ENCODE measurements at regions of chr5 and their contacts with region 1.

Region 1: GRCh38 chr5:56838409-56839039 is 23.2 kb downstream of the MAP3K1 start:
- DNase-seq: no peak

Region 2: GRCh38 chr5:56270568-56271392 is 567.7 kb before region 1 on chr5:
- CTCF ChIA-PET with region 1: interaction called, 38 read pairs
- POLR2A ChIA-PET with region 1: no interaction called
- DNase-seq: peak; percentile 80

Region 3: GRCh38 chr5:56737951-56738606 is 100.4 kb before region 1 on chr5:
- CTCF ChIA-PET with region 1: no interaction called
- POLR2A ChIA-PET with region 1: no interaction called
- DNase-seq: no peak

Region 4: GRCh38 chr5:56827049-56827448 is 11.5 kb before region 1 on chr5:
- CTCF ChIA-PET with region 1: interaction called, 12 read pairs
- POLR2A ChIA-PET with region 1: no interaction called
- DNase-seq: peak; percentile 49